ENCODE measurements at regions of chr3 and their contacts with region 1.

Region 1: GRCh38 chr3:150546226-150547044 is at the starts of genes EIF2A and SERP1:
- DNase-seq: peak; percentile 97 to 100 (median 99)
- ATAC-seq: peak; percentile 91 to 94 (median 92)
- H3K4me3 ChIP-seq: peak within 1 kb of the TSS; percentile 61 to 98
- H3K4me3 Mint-ChIP-seq: peak within 1 kb of the TSS; percentile 94 to 95 (median 94)
- H3K27ac ChIP-seq: peak within 1 kb of the TSS; percentile 89
- H3K27ac Mint-ChIP-seq: peak within 1 kb of the TSS; percentile 97 to 99
- H3K4me1 ChIP-seq: peaks cover 7 to 27% of the 10 kb centered on the region in 2 experiments
- H3K4me1 Mint-ChIP-seq: peaks cover 68 to 74% (median 70%) of the 10 kb centered on the region in 3 donors
- H3K27me3 ChIP-seq: no peaks in the 10 kb centered on the region
- H3K27me3 Mint-ChIP-seq: no peaks in the 10 kb centered on the region
- total RNA-seq, gene EIF2A: 81.5 to 126 (median 100) TPM
- total RNA-seq, gene SERP1: 109 to 134 (median 123) TPM

Region 2: GRCh38 chr3:150408221-150409102 is 138.0 kb before region 1 on chr3 and contains the start of gene TSC22D2:
- CTCF ChIA-PET with region 1: interaction called, 3 to 5 read pairs
- POLR2A ChIA-PET with region 1: interaction called, 3 to 14 read pairs
- DNase-seq: peak; percentile 89 to 99 (median 96)
- ATAC-seq: peak; percentile 78 to 81 (median 79)
- H3K4me3 ChIP-seq: peak within 1 kb of the TSS; percentile 80 to 93
- H3K4me3 Mint-ChIP-seq: peak within 1 kb of the TSS; percentile 87 to 95 (median 92)
- H3K27ac ChIP-seq: peak within 1 kb of the TSS; percentile 92
- H3K27ac Mint-ChIP-seq: peak within 1 kb of the TSS; percentile 95 to 98
- H3K4me1 ChIP-seq: peaks cover 8 to 19% of the 10 kb centered on the region in 2 experiments
- H3K4me1 Mint-ChIP-seq: peaks cover 33 to 44% (median 35%) of the 10 kb centered on the region in 3 donors
- H3K27me3 ChIP-seq: no peaks in the 10 kb centered on the region
- H3K27me3 Mint-ChIP-seq: no peaks in the 10 kb centered on the region
- total RNA-seq, gene TSC22D2: 21.2 to 55.0 (median 23.3) TPM

Region 3: GRCh38 chr3:150603153-150603979 is 56.9 kb after region 1 on chr3 and contains the start of gene SELENOT:
- CTCF ChIA-PET with region 1: interaction called, 5 to 8 read pairs
- POLR2A ChIA-PET with region 1: interaction called in 1 of 2 experiments, 27 read pairs
- DNase-seq: peak; percentile 84 to 98 (median 91)
- ATAC-seq: peak; percentile 83 to 88 (median 85)
- H3K4me3 ChIP-seq: peak within 1 kb of the TSS; percentile 95 to 97
- H3K4me3 Mint-ChIP-seq: peak within 1 kb of the TSS; percentile 98 to 99 (median 99)
- H3K27ac ChIP-seq: peak within 1 kb of the TSS; percentile 98
- H3K27ac Mint-ChIP-seq: peak within 1 kb of the TSS; percentile 98 to 99
- H3K4me1 ChIP-seq: peaks cover 28 to 32% of the 10 kb centered on the region in 2 experiments
- H3K4me1 Mint-ChIP-seq: peaks cover 64 to 75% (median 72%) of the 10 kb centered on the region in 3 donors
- H3K27me3 ChIP-seq: no peaks in the 10 kb centered on the region
- H3K27me3 Mint-ChIP-seq: no peaks in the 10 kb centered on the region
- total RNA-seq, gene SELENOT: 64.1 to 85.9 (median 70.3) TPM

Region 4: DNA sequence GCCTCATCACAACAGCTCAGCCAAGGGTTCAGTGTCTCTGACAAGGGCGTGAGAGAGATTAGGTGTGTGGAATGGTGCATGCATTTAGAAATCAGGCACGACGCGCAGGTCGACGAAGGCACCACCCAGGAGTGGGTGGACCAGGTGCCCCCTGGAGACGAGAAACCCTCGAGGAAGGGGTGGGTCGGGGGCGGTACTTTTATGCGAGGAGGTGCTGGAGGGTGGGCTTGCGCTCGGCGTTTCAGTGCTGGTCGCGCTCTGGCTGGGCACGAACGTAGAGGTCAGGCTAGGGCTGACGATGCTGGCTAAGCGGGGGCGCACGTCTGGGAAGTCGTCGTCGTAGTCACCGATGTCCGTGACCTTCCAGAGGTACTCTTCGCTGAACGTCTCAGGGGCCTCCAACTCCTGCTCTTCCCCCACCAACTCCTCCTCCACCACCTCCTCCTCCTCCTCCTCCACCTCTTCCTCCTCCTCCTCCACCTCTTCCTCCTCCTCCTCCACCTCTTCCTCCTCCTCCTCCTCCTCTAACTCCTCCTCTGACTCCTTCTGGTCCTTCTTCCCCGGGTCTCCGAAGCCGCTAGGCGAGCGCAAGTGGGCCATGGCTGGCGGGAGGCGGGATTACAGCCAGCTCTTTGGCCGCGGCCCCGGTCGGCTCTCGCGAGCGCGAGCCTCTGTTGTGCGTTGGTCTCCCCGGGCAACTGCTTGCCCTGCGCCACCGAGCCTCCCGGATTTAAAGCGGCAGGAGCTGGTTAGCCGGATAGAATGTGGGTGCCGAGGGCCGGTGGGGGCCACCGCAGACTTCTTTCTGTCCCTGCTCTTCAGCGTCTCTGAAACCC is 157.1 kb after region 1 on chr3 and contains the start of gene ERICH6:
- CTCF ChIA-PET with region 1: no interaction called
- POLR2A ChIA-PET with region 1: interaction called in 1 of 2 experiments, 16 read pairs
- DNase-seq: peak; percentile 44 to 84 (median 69)
- ATAC-seq: peak; percentile 84 to 89 (median 84)
- H3K4me3 ChIP-seq: peak within 1 kb of the TSS; percentile 87 to 89
- H3K4me3 Mint-ChIP-seq: peak within 1 kb of the TSS; percentile 93 to 98 (median 96)
- H3K27ac ChIP-seq: peak within 1 kb of the TSS; percentile 94
- H3K27ac Mint-ChIP-seq: peak within 1 kb of the TSS; percentile 96 to 97
- H3K4me1 ChIP-seq: peaks cover 9 to 23% of the 10 kb centered on the region in 2 experiments
- H3K4me1 Mint-ChIP-seq: peaks cover 17 to 28% (median 21%) of the 10 kb centered on the region in 3 donors
- H3K27me3 ChIP-seq: no peaks in the 10 kb centered on the region
- H3K27me3 Mint-ChIP-seq: no peaks in the 10 kb centered on the region
- total RNA-seq, gene ERICH6: 0.26 to 0.39 (median 0.28) TPM in 3 of 5 donors, not detected in the others

Region 5: DNA sequence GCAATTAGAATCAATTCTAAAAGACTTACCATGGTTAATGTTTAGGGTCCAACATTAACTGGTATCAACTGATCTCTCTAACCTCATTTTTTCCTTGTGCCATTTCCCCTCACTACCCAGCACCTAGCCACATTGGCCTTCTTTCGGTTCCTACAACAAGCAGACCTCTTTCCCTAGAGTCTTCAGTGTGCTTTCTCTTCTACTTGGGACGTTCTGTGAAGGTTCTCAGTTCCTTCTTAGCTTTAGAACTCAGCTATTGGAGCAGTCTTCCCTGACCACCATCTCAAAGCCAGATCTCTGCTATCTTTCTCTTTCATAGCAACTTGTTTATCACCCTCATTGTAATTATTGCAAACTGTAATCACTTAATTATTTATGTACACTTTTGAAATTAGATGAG is 390.3 kb after region 1 on chr3:
- CTCF ChIA-PET with region 1: no interaction called
- POLR2A ChIA-PET with region 1: no interaction called
- DNase-seq: no peak
- ATAC-seq: no peak
- H3K4me3 ChIP-seq: no peak overlapping the region
- H3K4me3 Mint-ChIP-seq: no peak overlapping the region
- H3K27ac ChIP-seq: no peak overlapping the region
- H3K27ac Mint-ChIP-seq: no peak overlapping the region
- H3K4me1 ChIP-seq: no peaks in the 10 kb centered on the region
- H3K4me1 Mint-ChIP-seq: no peaks in the 10 kb centered on the region
- H3K27me3 ChIP-seq: peaks cover 0 to 3% of the 10 kb centered on the region in 2 experiments
- H3K27me3 Mint-ChIP-seq: peaks cover 18 to 26% of the 10 kb centered on the region in 2 donors